ENCODE measurements at regions of chr3 and their contacts with region 1.

Region 1: GRCh38 chr3:184811999-184812661 is at the start of gene VPS8:
- DNase-seq: peak; percentile 45
- H3K4me3 ChIP-seq: peak within 1 kb of the TSS; percentile 91
- CTCF ChIP-seq: peak; percentile 80

Region 2: DNA sequence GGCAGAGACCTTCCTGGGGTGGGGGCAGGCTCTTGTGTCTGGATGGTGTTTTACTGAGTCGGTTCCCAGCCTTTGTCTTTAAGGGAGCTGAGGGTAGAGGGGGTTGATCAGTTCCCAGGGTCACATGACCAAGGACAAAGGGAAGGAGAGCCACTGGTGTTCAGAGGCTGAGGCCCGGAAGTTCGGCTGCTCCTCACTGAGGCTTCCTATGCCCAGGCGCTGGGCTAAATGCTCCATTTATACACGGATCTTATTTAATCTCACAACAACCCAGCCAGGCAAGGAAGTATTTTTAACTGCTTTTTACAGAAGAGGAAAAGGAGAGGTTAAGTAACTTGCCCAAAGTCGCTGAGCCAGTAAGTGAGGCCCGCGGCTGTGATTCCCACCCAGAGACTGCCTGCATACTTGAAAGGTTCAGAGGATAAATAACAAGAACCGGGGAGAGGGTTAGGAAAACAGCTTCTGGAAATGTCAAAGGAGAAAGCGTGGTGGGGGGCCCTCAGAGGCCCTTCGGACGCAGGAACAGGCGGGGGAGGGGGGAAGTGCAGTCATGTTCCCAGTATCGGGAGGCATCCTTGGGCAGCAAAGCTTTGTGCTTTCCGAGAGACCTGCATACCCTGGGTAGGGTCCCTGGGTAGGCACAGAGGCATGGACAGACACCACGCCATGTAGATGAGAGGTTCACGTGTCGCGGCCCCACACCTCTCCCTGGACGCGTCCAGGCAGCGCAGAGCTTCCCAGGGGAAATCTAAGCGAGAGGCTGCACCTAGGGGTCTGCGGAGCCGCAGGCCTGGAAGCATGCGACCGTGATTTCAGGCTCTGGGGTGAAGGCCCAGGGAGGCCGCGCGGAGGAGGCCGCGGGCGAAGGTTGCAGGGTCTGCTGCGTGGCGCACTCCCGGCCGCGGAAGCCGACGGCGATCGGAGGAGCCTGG is 229.2 kb before region 1 on chr3:
- CTCF ChIA-PET with region 1: no interaction called
- POLR2A ChIA-PET with region 1: no interaction called
- DNase-seq: no peak
- H3K4me3 ChIP-seq: peak overlapping the region; percentile 29
- CTCF ChIP-seq: no peak

Region 3: DNA sequence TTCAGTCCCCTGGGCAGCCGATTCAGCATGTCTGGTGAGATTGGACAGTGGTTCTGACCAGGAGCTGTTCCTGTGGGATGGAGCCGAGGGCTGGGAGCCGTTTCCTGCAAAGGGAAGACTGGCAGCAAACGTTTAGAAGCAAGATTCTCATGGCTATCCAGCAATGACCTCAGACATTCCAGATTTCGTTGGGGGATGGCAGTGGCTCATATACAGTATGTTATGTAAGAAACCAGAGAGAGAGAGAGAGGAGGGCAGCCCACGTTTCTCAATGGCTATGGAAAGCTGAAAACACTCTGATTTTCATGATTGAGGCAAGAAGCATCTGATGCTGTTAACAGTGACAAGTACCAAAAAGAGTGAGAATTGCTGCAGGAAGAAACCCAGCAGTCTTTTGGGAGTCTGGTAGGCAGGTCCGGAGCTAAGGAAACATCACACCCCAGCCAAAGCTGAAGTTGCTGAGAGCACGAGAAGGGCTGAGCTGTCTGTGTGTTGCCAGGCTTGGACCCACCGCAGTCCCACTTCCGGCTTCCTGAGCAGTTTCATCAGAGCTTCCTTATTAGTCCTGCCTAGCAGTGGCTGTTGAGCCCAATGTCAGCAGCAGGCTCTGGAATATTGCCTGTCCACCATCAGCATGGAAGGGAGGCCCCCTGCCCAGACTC is 25.7 kb before region 1 on chr3:
- CTCF ChIA-PET with region 1: interaction called, 13 read pairs
- POLR2A ChIA-PET with region 1: no interaction called
- DNase-seq: peak; percentile 77
- H3K4me3 ChIP-seq: peak overlapping the region; percentile 27
- CTCF ChIP-seq: no peak

Region 4: GRCh38 chr3:184800349-184800930 is 11.7 kb before region 1 on chr3:
- CTCF ChIA-PET with region 1: interaction called, 70 read pairs
- POLR2A ChIA-PET with region 1: no interaction called
- DNase-seq: no peak
- H3K4me3 ChIP-seq: no peak overlapping the region
- CTCF ChIP-seq: no peak

Region 5: GRCh38 chr3:184822654-184823053 is 10.5 kb after region 1 on chr3:
- CTCF ChIA-PET with region 1: interaction called, 17 read pairs
- POLR2A ChIA-PET with region 1: no interaction called
- DNase-seq: no peak
- H3K4me3 ChIP-seq: no peak overlapping the region
- CTCF ChIP-seq: no peak

Measured in AG04449 (cell line).